Endothelial cell of umbilical vein (primary cell): ENCODE measurements at regions of chr11 and their contacts with region 1.

Region 1: DNA sequence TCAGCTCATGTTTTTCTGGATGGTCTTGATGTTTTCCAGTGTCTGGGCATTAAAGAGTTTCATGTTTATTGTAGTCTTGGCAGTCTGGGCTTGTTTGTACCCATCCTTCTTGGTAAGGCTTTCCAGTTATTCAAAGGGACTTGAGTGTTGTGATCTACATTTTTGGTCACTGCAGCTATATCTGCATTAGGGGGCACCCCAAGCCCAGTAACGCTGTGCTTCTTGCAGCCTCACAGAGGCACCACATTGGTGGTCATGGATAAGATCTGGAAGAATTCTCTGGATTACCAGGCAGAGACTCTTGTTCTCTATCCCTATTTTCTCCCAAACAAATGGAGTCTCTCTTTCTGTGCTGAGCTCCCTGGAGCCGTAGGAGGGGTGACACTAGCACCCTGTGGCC is 451.5 kb upstream of the FAT3 start:
- DNase-seq: peak; percentile 16
- H3K4me3 ChIP-seq: no peak overlapping the region
- H3K27ac ChIP-seq: no peak overlapping the region
- H3K4me1 ChIP-seq: no peaks in the 10 kb centered on the region
- H3K27me3 ChIP-seq: no peaks in the 10 kb centered on the region
- CTCF ChIP-seq: no peak
- POLR2A ChIP-seq: no peak

Region 2: DNA sequence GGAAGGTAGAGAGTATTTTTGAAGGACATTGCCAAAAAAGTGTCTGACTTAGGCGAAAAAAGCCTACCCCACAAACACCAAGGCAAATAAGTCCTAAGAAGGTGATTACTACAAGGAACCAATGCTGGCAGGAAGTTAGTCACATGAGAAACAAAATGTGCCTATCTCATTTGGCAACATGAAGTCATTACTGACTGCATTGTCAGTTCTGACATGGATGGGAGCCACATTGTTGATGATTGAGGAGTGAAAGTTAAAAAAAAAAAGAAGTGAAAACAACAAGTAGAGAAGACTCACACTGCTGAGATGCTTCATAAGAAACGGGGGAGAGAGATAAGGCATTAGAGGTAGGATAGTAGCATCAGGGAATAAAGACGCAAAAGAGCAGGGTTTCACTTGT is 310.0 kb after region 1 on chr11:
- CTCF ChIA-PET with region 1: no interaction called
- POLR2A ChIA-PET with region 1: interaction called, 10 read pairs
- dilution Hi-C with region 1: no loop called
- intact Hi-C with region 1: no loop called
- DNase-seq: peak; percentile 13
- H3K4me3 ChIP-seq: no peak overlapping the region
- H3K27ac ChIP-seq: no peak overlapping the region
- H3K4me1 ChIP-seq: no peaks in the 10 kb centered on the region
- H3K27me3 ChIP-seq: no peaks in the 10 kb centered on the region
- CTCF ChIP-seq: no peak
- POLR2A ChIP-seq: no peak

Region 3: GRCh38 chr11:92276773-92277172 is 503.7 kb after region 1 on chr11:
- CTCF ChIA-PET with region 1: no interaction called
- POLR2A ChIA-PET with region 1: no interaction called
- dilution Hi-C with region 1: no loop called
- intact Hi-C with region 1: no loop called
- DNase-seq: peak; percentile 4
- H3K4me3 ChIP-seq: no peak overlapping the region
- H3K27ac ChIP-seq: no peak overlapping the region
- H3K4me1 ChIP-seq: no peaks in the 10 kb centered on the region
- H3K27me3 ChIP-seq: no peaks in the 10 kb centered on the region
- CTCF ChIP-seq: no peak
- POLR2A ChIP-seq: no peak

Region 4: DNA sequence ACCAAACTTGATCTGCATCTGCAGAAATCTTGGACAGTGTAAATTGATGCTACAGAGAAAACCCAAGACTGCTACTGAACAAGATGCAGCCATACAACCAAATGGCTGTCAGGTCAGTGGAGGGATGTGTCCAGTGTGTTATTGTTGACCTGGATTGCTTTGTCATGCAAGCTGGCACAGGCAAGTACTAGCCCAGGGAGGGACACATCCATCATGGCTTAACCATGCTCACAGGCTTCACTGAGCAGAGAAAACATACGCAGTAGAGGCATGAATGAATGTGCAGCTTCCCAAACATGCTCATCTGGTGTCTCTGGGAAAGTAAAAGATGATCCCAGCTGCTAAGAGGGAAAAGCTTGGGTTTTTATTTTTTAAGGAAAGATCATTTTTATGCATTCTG is 1290.0 kb after region 1 on chr11:
- CTCF ChIA-PET with region 1: no interaction called
- POLR2A ChIA-PET with region 1: no interaction called
- dilution Hi-C with region 1: no loop called
- intact Hi-C with region 1: loop called (anchors 5 kb)
- DNase-seq: no peak
- H3K4me3 ChIP-seq: no peak overlapping the region
- H3K27ac ChIP-seq: no peak overlapping the region
- H3K4me1 ChIP-seq: no peaks in the 10 kb centered on the region
- H3K27me3 ChIP-seq: no peaks in the 10 kb centered on the region
- CTCF ChIP-seq: no peak
- POLR2A ChIP-seq: no peak